CD8-positive, alpha-beta T cell (primary cell): ENCODE measurements at regions of chr7 and their contacts with region 1.

Region 1: GRCh38 chr7:101287032-101287431 is 34.6 kb downstream of the IFT22 start:
- DNase-seq: no peak
- ATAC-seq: no peak
- H3K4me3 ChIP-seq: no peak overlapping the region
- H3K4me3 Mint-ChIP-seq: no peak overlapping the region
- H3K27ac ChIP-seq: no peak overlapping the region
- H3K27ac Mint-ChIP-seq: no peak overlapping the region
- H3K4me1 ChIP-seq: peaks cover 4% of the 10 kb centered on the region
- H3K4me1 Mint-ChIP-seq: peaks cover 24% of the 10 kb centered on the region
- H3K27me3 ChIP-seq: peaks cover 0 to 2% of the 10 kb centered on the region in 2 experiments
- H3K27me3 Mint-ChIP-seq: peaks cover 9% of the 10 kb centered on the region
- CTCF ChIP-seq: no peak

Region 2: DNA sequence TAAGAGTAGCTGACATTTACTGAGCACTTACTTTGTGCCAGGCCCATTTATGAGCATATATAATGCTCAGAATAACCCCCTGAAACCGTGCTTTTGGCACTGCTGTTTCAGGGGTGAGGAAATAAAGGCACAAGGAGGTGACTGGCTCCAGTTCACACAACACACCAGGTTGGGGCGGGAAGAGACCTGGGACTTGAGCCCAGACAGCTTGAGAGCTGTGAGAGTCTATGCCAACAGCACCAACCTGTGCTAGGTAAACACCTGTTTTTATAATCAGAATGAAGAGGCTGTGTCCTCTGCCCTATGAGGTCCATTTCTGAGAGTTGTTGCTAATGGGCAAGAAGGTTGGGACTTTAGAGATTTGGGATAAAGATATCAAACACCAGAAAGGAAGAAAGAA is 1302.4 kb before region 1 on chr7:
- CTCF ChIA-PET with region 1: no interaction called
- POLR2A ChIA-PET with region 1: no interaction called
- intact Hi-C with region 1: loop called (anchors 5 kb)
- DNase-seq: no peak
- ATAC-seq: no peak
- H3K4me3 ChIP-seq: no peak overlapping the region
- H3K4me3 Mint-ChIP-seq: no peak overlapping the region
- H3K27ac ChIP-seq: no peak overlapping the region
- H3K27ac Mint-ChIP-seq: no peak overlapping the region
- H3K4me1 ChIP-seq: no peaks in the 10 kb centered on the region
- H3K4me1 Mint-ChIP-seq: peaks cover 6% of the 10 kb centered on the region
- H3K27me3 ChIP-seq: no peaks in the 10 kb centered on the region
- H3K27me3 Mint-ChIP-seq: peaks cover 3% of the 10 kb centered on the region
- CTCF ChIP-seq: no peak

Region 3: GRCh38 chr7:101153969-101154692 is 132.9 kb before region 1 on chr7 and contains the start of gene AP1S1:
- CTCF ChIA-PET with region 1: interaction called, 12 read pairs
- POLR2A ChIA-PET with region 1: no interaction called
- intact Hi-C with region 1: no loop called
- DNase-seq: peak; percentile 76 to 96 (median 87)
- ATAC-seq: peak; percentile 88
- H3K4me3 ChIP-seq: peak within 1 kb of the TSS; percentile 61 to 77
- H3K4me3 Mint-ChIP-seq: peak within 1 kb of the TSS; percentile 88
- H3K27ac ChIP-seq: no peak within 1 kb of the TSS
- H3K27ac Mint-ChIP-seq: peak within 1 kb of the TSS; percentile 47
- H3K4me1 ChIP-seq: peaks cover 12% of the 10 kb centered on the region
- H3K4me1 Mint-ChIP-seq: peaks cover 11% of the 10 kb centered on the region
- H3K27me3 ChIP-seq: no peaks in the 10 kb centered on the region
- H3K27me3 Mint-ChIP-seq: peaks cover 9% of the 10 kb centered on the region
- CTCF ChIP-seq: no peak
- total RNA-seq, gene AP1S1: 2.1 to 2.2 TPM